ENCODE measurements at regions of chr5 and their contacts with region 1.

Region 1: GRCh38 chr5:143008809-143009521 is 238.8 kb downstream of the ARHGAP26 start:
- DNase-seq: peak; percentile 90
- H3K4me3 Mint-ChIP-seq: peak overlapping the region; percentile 31
- H3K27ac Mint-ChIP-seq: peak overlapping the region; percentile 73
- H3K4me1 Mint-ChIP-seq: peaks cover 69% of the 10 kb centered on the region
- H3K27me3 Mint-ChIP-seq: no peaks in the 10 kb centered on the region

Region 2: DNA sequence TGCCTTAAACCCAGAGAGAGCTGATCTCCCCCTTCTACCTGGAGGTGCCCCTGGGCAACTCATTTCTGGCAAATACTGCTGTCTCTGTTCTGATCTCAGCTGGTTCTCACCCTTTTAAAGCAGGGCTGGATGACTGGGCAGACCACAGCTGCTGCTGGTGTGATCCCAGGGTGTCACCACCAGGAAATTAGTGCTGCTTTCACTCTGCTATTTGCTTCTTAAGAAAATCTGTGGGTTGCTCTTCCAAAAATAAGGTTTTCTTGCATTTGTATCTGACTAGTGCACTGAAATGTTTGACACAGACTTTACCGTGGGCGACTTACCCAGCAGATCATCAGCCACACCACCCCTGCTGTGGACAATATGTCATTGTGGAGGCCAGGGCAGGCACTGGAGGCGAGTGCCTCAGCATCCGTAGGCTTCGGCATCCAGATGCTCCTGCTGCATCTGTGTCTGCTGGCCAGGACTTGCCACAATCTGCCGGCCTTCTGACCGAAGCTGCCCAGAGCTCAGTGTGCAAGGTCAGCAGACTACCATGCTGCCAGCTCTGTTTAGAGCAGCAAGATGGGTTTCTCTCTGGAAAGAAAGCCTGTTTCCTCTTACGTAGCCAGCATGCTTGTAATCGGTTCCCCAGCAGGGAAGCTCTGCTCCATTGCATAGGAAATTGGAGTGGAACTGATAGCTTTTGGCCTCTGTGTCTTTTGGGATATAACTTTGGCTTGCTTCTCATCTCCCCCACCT is 225.2 kb before region 1 on chr5:
- CTCF ChIA-PET with region 1: interaction called, 5 read pairs
- POLR2A ChIA-PET with region 1: no interaction called
- intact Hi-C with region 1: loop called (anchors 1 kb)
- DNase-seq: peak; percentile 90
- H3K4me3 Mint-ChIP-seq: peak overlapping the region; percentile 34
- H3K27ac Mint-ChIP-seq: peak overlapping the region; percentile 85
- H3K4me1 Mint-ChIP-seq: peaks cover 56% of the 10 kb centered on the region
- H3K27me3 Mint-ChIP-seq: no peaks in the 10 kb centered on the region

Region 3: DNA sequence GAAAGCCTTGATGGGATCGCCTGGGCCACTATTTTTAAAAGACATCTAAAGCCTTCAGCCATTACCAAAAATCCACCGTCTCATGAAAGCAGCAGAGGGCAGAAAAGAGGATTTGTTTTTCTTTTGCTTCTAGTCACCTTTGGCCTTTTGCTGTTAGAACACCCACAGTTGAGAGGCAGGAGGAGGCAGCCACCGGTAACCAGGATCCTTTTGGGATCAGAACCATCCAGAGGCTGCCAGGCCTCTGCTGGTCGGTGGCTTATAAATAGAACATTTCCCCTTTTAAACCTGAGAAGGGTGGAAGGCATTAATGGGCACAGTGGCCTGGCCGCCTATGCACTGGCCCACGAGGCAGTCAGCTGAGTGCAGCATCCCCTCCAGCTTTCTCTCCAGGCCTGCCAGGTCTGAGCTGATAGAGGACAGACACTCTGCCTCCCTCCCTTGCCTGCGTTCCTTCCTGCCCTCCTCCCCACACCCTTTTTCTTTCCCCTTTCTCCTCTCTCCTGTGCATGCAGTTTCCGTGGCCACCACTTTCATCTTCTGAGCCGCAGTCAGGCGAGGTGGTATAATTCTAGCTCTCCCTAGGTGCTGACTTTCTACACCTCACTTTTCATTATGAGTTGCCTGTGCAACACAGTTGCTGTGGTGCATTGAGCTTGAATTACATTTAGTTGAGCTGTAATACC is 14.6 kb after region 1 on chr5:
- CTCF ChIA-PET with region 1: interaction called, 11 read pairs
- POLR2A ChIA-PET with region 1: interaction called, 6 read pairs
- intact Hi-C with region 1: loop called (anchors 1 kb)
- DNase-seq: peak; percentile 85
- H3K4me3 Mint-ChIP-seq: no peak overlapping the region
- H3K27ac Mint-ChIP-seq: peak overlapping the region; percentile 59
- H3K4me1 Mint-ChIP-seq: peaks cover 53% of the 10 kb centered on the region
- H3K27me3 Mint-ChIP-seq: no peaks in the 10 kb centered on the region

Region 4: DNA sequence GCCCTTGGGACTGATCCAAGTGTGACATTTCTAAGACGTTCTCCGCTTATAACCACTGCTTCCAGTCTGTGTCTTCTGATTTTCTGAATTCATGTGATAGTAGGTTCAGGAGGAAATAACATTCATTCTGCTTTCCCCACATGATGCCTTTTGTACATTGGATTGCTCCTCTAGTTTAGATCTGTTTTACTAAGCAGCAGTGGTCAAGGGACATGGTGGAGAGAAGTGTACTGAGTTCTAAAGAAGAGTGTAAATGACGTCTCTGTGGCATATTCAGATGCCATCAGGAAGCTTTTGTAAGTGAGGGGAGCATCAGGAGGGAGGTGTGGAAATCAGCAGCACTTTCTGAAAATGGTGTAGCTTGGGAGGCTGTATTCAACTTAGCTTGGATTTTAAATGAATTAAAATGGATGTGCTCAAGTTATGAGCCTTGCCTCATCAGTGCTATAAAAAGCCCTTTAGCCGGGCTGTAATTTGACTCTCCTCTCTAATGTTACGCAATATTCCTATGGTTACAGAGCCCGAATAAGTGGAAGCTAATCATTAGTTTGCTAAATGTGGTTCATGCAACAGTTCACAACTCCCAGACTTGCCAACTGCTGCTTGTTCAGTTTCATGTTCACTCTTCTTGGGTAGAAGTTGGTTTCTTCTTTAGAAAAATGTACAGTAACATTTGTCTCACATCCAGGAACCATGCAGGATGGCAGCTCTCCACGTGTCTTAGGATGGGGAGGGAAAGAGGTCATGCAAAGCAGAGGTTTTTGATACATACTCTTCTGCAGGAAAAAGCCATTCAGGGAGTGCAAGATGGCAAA is 42.5 kb after region 1 on chr5:
- CTCF ChIA-PET with region 1: interaction called, 4 read pairs
- POLR2A ChIA-PET with region 1: no interaction called
- intact Hi-C with region 1: loop called (anchors 2 kb)
- DNase-seq: no peak
- H3K4me3 Mint-ChIP-seq: no peak overlapping the region
- H3K27ac Mint-ChIP-seq: no peak overlapping the region
- H3K4me1 Mint-ChIP-seq: peaks cover 66% of the 10 kb centered on the region
- H3K27me3 Mint-ChIP-seq: no peaks in the 10 kb centered on the region

Region 5: GRCh38 chr5:143101121-143101520 is 92.2 kb after region 1 on chr5:
- CTCF ChIA-PET with region 1: interaction called, 3 read pairs
- POLR2A ChIA-PET with region 1: no interaction called
- intact Hi-C with region 1: loop called (anchors 1 kb)
- DNase-seq: peak; percentile 23
- H3K4me3 Mint-ChIP-seq: no peak overlapping the region
- H3K27ac Mint-ChIP-seq: peak overlapping the region; percentile 90
- H3K4me1 Mint-ChIP-seq: peaks cover 40% of the 10 kb centered on the region
- H3K27me3 Mint-ChIP-seq: no peaks in the 10 kb centered on the region

Region 6: DNA sequence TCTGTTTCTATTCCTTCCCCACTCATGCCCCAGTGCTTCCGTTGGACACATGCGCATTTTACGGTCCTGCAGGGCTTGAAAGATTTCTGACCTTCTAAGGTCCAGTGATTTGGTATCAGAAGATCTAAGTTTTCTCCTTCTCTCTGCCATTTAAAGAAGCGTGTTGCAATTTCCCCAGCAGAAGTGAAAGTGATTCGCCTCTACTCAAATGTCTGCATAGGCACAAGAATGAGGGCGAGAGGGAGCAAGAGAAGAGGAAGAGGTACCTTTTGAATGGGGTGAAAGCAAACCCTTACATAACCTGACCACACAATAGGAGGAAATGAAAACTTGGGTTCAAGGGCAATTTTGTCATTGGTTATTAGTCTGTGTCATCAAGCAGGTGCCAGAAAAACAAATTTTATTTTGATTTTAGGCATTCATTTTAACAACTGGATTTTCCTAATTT is 426.3 kb after region 1 on chr5:
- CTCF ChIA-PET with region 1: no interaction called
- POLR2A ChIA-PET with region 1: interaction called, 3 read pairs
- intact Hi-C with region 1: loop called (anchors 1 kb)
- DNase-seq: peak; percentile 51
- H3K4me3 Mint-ChIP-seq: peak overlapping the region; percentile 81
- H3K27ac Mint-ChIP-seq: peak overlapping the region; percentile 87
- H3K4me1 Mint-ChIP-seq: peaks cover 68% of the 10 kb centered on the region
- H3K27me3 Mint-ChIP-seq: no peaks in the 10 kb centered on the region

Region 7: GRCh38 chr5:143679777-143680176 is 670.8 kb after region 1 on chr5:
- CTCF ChIA-PET with region 1: no interaction called
- POLR2A ChIA-PET with region 1: no interaction called
- intact Hi-C with region 1: loop called (anchors 2 kb)
- DNase-seq: no peak
- H3K4me3 Mint-ChIP-seq: no peak overlapping the region
- H3K27ac Mint-ChIP-seq: no peak overlapping the region
- H3K4me1 Mint-ChIP-seq: peaks cover 23% of the 10 kb centered on the region
- H3K27me3 Mint-ChIP-seq: peaks cover under 1% of the 10 kb centered on the region